OCI-LY7 (cell line): ENCODE measurements at regions of chr22 and their contacts with region 1.

Region 1: DNA sequence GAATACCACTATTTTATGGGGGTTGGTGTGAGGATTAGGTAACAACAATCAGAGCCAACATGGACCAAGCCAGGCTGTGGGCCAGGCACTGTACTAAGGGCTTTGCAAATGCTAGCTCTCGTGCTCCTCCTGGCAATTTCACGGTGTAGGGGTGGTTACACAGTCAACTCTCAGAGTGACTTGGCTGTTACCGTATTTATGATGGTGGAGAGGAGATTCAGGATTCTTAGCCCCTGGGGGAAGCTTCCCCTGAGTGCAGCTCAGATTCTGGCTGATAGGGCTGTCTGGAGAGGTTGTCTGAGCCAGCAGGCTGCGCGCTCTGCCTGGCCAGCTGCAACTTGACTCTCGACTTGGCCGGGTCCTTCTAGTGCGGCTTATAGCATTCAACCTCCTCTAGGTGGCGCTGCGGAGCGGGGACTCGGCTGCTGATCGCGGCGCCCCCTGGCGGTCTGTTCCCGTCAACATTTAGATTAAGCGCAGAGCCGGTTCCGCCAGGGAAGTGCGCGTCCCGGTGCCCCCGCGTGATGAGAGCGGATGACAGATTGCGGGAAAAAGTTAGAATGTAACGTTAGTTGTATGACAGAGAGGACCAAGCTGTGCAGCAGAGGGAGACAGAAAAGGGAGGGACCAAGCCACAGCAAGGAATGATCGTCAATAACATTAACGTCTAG is 4.5 kb upstream of the NCF4 start:
- DNase-seq: peak; percentile 93
- H3K4me3 ChIP-seq: peak overlapping the region; percentile 24
- H3K27ac ChIP-seq: no peak overlapping the region
- H3K4me1 ChIP-seq: peaks cover 60% of the 10 kb centered on the region
- CTCF ChIP-seq: peak; percentile 100

Region 2: DNA sequence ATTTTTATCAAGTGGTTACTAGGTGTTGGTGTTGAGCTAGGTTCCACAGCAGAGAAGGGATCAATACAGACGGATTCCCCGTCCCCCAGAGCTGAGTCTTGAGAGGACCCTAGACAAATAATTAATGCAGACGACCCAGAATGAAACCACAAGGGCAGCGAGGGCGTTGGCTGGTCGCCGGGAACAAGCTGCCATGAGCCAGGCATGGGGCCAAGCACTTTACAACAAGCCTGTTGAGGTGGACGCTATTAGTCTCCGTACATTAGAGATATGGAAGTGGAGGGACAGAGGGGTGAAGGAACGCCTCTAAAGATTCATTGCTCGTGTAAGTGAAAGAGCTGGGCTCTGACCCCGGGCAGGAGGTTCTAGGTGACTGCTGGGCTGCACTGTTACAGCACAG is 250.1 kb before region 1 on chr22:
- CTCF ChIA-PET with region 1: no interaction called
- POLR2A ChIA-PET with region 1: no interaction called
- intact Hi-C with region 1: no loop called
- DNase-seq: no peak
- H3K4me3 ChIP-seq: no peak overlapping the region
- H3K27ac ChIP-seq: no peak overlapping the region
- H3K4me1 ChIP-seq: no peaks in the 10 kb centered on the region
- CTCF ChIP-seq: no peak

Region 3: DNA sequence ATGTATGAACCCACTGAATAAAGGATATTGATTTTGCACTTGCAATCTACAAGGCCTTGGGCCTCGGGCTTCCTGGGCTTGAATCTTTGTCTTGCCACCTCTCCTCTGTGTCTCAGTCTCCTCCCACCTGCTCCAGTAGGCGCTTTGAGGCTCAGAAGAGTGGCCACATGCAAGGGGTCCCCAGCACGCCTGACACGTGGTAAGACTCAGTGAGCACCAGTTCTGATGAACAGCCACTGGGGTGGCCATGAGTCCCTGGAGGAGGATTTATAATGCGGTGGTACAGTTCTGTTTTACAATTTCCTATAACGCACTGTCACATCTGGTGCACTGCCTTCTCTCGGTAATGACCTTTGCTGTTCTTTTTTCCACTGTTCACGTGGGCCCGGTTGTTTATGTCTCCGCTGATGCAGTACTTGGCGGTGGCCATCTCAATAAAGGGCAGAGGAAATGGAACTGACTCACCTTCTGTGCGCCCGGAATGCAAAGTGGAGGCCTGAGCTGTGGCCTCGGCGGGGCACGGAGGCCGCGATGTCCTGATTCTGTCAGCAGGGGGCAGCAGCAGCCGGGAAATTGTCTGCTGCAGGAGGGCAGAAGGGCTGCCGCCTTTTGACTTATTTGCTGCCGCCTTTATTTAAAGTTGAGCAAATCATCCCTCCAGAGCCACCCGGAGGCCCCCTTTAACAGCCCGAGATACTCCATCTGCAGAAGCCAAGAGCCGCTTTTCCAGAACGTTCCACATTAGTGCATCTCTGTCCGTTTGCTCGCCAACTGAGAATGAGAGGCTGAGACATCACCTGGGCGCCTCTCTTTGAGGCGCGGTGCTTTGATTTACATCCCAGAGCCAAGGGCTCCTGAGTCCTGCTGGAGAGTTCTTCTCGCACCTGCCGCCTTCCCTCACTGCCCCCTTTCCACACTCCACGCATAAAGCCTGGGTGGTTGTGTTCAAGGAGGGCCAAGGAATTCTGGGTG is 74.3 kb before region 1 on chr22:
- CTCF ChIA-PET with region 1: interaction called, 4 read pairs
- POLR2A ChIA-PET with region 1: interaction called, 8 read pairs
- intact Hi-C with region 1: loop called (anchors 1 kb)
- DNase-seq: peak; percentile 80
- H3K4me3 ChIP-seq: no peak overlapping the region
- H3K27ac ChIP-seq: no peak overlapping the region
- H3K4me1 ChIP-seq: peaks cover 6% of the 10 kb centered on the region
- CTCF ChIP-seq: peak; percentile 97

Region 4: GRCh38 chr22:36913427-36914389 is 57.5 kb after region 1 on chr22 and contains the start of gene CSF2RB:
- CTCF ChIA-PET with region 1: no interaction called
- POLR2A ChIA-PET with region 1: interaction called, 4 read pairs
- intact Hi-C with region 1: loop called (anchors 1 kb)
- DNase-seq: peak; percentile 55
- H3K4me3 ChIP-seq: peak within 1 kb of the TSS; percentile 64
- H3K27ac ChIP-seq: peak within 1 kb of the TSS; percentile 47
- H3K4me1 ChIP-seq: peaks cover 35% of the 10 kb centered on the region
- CTCF ChIP-seq: no peak
- total RNA-seq, gene CSF2RB: 6.2 and 7.6 TPM in 2 replicates

Region 5: GRCh38 chr22:37019309-37020125 is 163.3 kb after region 1 on chr22 and contains the starts of genes MPST and TST:
- CTCF ChIA-PET with region 1: no interaction called
- POLR2A ChIA-PET with region 1: no interaction called
- intact Hi-C with region 1: loop called (anchors 5 kb)
- DNase-seq: peak; percentile 86
- H3K4me3 ChIP-seq: peak within 1 kb of the TSS; percentile 90
- H3K27ac ChIP-seq: peak within 1 kb of the TSS; percentile 46
- H3K4me1 ChIP-seq: peaks cover 13% of the 10 kb centered on the region
- CTCF ChIP-seq: peak; percentile 24; the same call in 1 of the 2 replicates
- total RNA-seq, gene MPST: 105 and 124 TPM in 2 replicates
- total RNA-seq, gene TST: 36.0 and 37.6 TPM in 2 replicates

Region 6: DNA sequence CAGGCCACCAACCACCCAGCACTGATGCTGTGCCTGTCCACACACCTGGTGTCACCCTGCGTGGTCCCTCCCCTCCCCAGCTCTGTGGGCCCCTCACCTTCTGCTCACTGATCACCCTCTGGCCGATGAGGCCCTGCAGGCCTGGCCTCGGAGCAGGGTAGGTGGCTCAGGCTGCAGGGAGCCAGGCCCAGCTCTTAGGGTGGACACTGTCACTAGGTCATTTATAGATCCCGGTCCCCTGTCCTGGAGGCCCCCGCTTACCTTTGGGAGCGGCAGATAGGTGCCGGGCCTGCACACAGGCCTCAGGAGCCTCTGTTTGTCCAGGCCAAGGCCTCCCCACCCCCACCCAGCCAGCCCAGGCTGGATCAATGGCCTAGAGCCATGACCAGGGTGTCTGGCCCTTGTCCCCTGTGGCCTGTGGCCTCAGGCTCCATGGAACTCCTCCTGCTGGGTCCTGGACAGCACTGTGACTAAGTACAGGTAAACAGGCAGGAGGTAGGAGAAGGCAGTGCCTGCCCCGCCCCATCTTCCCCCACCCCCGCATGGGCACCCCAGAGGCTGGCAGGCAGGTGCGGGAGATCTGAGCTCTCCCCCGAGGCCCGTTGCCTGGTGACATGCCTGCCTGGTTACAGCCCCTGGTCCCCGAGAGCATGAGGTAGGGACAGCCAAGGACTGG is 253.1 kb after region 1 on chr22 and contains the start of gene TMPRSS6:
- CTCF ChIA-PET with region 1: no interaction called
- POLR2A ChIA-PET with region 1: no interaction called
- intact Hi-C with region 1: no loop called
- DNase-seq: no peak
- H3K4me3 ChIP-seq: no peak within 1 kb of the TSS
- H3K27ac ChIP-seq: no peak within 1 kb of the TSS
- H3K4me1 ChIP-seq: no peaks in the 10 kb centered on the region
- CTCF ChIP-seq: no peak
- total RNA-seq, gene TMPRSS6: not detected in 2 replicates